GM13976 (cell line): ENCODE measurements at regions of chr1 and their contacts with region 1.

Region 1: GRCh38 chr1:206001476-206001888 is 1.7 kb downstream of the RAB7B start:
- DNase-seq: no peak
- CTCF ChIP-seq: no peak

Region 2: GRCh38 chr1:206117151-206117948 is 115.9 kb after region 1 on chr1 and contains the start of gene AVPR1B:
- in situ Hi-C with region 1: loop called (anchors 10 kb)
- DNase-seq: peak; percentile 48
- CTCF ChIP-seq: no peak